ENCODE measurements at regions of chr1 and their contacts with region 1.

Region 1: DNA sequence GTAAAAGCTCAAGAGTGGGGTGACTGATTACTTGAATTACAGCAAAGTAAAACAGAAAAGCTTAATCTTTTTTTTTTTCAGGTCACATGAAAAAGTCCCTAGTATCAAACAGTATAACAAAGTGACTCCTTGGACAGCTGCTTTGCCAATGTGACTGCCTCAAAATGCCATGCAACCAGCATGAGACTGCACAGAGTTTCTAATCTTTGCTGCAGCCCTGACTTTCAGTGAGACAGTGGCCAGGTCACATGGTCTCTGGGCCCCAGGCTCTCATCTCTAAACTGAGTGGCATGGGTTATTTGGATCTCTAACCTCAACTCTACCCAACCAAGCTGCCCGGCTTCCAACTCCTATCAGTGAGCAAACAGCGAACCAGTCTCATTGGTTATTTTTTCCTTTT is 169.0 kb downstream of the VAV3 start:
- DNase-seq: peak; percentile 18
- ATAC-seq: peak; percentile 72
- H3K4me3 Mint-ChIP-seq: no peak overlapping the region
- H3K27ac Mint-ChIP-seq: peak overlapping the region; percentile 48
- H3K4me1 Mint-ChIP-seq: peaks cover 31% of the 10 kb centered on the region
- H3K27me3 Mint-ChIP-seq: no peaks in the 10 kb centered on the region

Region 2: DNA sequence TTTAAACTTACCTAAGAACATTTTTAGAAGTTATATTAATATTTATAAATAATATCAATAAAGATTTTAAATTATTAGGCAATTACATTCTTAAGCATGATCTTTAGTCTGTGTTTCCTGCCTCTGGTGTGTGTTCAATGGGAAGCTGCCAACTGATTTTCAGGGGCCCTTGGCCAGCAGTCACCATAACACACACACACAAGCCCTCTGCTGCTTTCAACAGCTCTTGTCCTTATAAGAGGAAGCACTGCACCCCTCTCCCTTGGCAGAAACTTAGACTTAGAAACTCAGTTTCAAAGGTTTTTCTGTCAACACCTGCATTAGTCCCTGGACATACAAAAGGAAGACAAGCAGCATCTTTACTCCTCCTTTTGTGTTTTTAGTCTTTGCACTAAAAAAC is 87.6 kb after region 1 on chr1:
- CTCF ChIA-PET with region 1: no interaction called
- POLR2A ChIA-PET with region 1: no interaction called
- intact Hi-C with region 1: loop called in 1 of 2 experiments (anchors 5 kb)
- DNase-seq: no peak
- ATAC-seq: no peak
- H3K4me3 Mint-ChIP-seq: no peak overlapping the region
- H3K27ac Mint-ChIP-seq: no peak overlapping the region
- H3K4me1 Mint-ChIP-seq: peaks cover 13% of the 10 kb centered on the region
- H3K27me3 Mint-ChIP-seq: no peaks in the 10 kb centered on the region

Region 3: GRCh38 chr1:108152782-108153222 is 356.8 kb after region 1 on chr1:
- CTCF ChIA-PET with region 1: no interaction called
- POLR2A ChIA-PET with region 1: no interaction called
- intact Hi-C with region 1: no loop called
- DNase-seq: no peak
- ATAC-seq: no peak
- H3K4me3 Mint-ChIP-seq: no peak overlapping the region
- H3K27ac Mint-ChIP-seq: no peak overlapping the region
- H3K4me1 Mint-ChIP-seq: no peaks in the 10 kb centered on the region
- H3K27me3 Mint-ChIP-seq: no peaks in the 10 kb centered on the region

Measured in activated CD4-positive, alpha-beta T cell treated with anti-CD3 and anti-CD28 coated beads for 36 hours (primary cell).